Right ventricle myocardium superior (tissue), 1 donor: ENCODE measurements at regions of chr1 and their contacts with region 1.

Region 1: GRCh38 chr1:197951089-197951488 is 33.9 kb downstream of the LHX9 start:
- DNase-seq: no peak
- ATAC-seq: no peak

Region 2: GRCh38 chr1:197967063-197967462 is 16.0 kb after region 1 on chr1:
- intact Hi-C with region 1: loop called (anchors 2 kb)
- DNase-seq: no peak
- ATAC-seq: no peak